ENCODE measurements at regions of chr20 and their contacts with region 1.

Region 1: GRCh38 chr20:4966826-4967751 is 34.2 kb downstream of the SLC23A2 start:
- DNase-seq: no peak
- H3K4me3 Mint-ChIP-seq: no peak overlapping the region
- H3K27ac Mint-ChIP-seq: no peak overlapping the region
- H3K4me1 Mint-ChIP-seq: peaks cover 9% of the 10 kb centered on the region
- H3K27me3 Mint-ChIP-seq: no peaks in the 10 kb centered on the region

Region 2: DNA sequence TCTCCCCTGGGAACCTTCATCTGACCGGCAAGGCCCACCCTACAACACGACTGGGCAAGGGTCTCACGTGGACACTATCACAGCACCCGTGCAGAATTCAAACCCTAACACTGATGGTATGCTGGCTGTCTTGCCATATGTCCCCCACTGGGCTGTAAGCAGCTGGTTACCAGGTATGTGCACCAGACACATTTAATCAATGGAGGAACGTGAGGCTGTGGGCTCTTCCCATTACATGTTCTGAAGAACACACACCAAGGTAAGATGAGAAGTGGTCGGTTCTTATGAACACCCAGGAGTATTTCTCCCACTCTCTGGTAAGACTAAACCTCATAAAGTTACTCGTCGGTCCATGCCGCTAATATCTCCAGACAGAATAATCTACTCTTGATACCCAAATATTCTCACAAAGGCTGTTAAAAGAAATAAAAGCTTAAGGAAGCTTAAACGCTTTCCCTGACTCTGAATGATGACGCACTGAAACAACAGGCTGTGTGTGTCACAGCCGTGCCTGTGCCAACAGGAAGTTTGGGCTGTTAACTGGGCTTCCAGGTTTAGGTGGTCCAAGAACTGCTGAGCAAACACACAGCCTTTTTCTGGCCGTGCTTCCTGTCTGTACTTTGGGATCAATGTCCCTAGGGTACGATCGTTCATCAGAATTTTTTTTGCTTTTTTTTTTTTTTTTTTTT is 41.1 kb before region 1 on chr20:
- CTCF ChIA-PET with region 1: no interaction called
- POLR2A ChIA-PET with region 1: no interaction called
- DNase-seq: no peak
- H3K4me3 Mint-ChIP-seq: no peak overlapping the region
- H3K27ac Mint-ChIP-seq: no peak overlapping the region
- H3K4me1 Mint-ChIP-seq: peaks cover 16% of the 10 kb centered on the region
- H3K27me3 Mint-ChIP-seq: no peaks in the 10 kb centered on the region

Region 3: GRCh38 chr20:4956200-4956810 is 10.8 kb before region 1 on chr20:
- CTCF ChIA-PET with region 1: interaction called, 11 read pairs
- POLR2A ChIA-PET with region 1: interaction called, 3 read pairs
- DNase-seq: no peak
- H3K4me3 Mint-ChIP-seq: no peak overlapping the region
- H3K27ac Mint-ChIP-seq: no peak overlapping the region
- H3K4me1 Mint-ChIP-seq: peaks cover 9% of the 10 kb centered on the region
- H3K27me3 Mint-ChIP-seq: no peaks in the 10 kb centered on the region

Measured in activated CD4-positive, alpha-beta memory T cell treated with anti-CD3 and anti-CD28 coated beads, Interleukin-2, amount 10 ng/mL, durations not matched to agents 7 days and 5 days (primary cell).